KBM-7 (cell line): ENCODE measurements at regions of chr20 and their contacts with region 1.

Region 1: GRCh38 chr20:44388466-44389023 is 33.0 kb downstream of the HNF4A start:
- DNase-seq: peak; percentile 40

Region 2: DNA sequence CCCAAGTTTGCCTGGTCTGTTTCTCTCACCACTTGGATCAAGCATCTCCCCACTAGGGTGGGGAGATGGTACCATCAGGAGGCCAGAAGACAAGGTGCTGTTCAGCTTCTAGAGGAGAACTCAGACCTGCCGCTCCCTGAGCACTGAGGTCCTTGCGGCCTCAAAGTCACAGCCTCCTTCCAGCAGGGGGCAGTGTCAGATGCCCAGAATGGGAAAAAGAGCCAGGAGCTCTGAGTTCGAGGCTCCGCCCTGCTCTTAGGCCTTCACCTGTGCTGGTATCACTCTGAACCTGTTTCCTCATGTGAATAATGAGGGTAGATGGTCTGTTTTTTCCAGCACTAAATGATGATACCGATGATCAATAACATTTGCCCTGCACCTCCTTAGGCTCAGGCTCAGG is 405.2 kb before region 1 on chr20:
- in situ Hi-C with region 1: no loop called
- DNase-seq: no peak

Region 3: DNA sequence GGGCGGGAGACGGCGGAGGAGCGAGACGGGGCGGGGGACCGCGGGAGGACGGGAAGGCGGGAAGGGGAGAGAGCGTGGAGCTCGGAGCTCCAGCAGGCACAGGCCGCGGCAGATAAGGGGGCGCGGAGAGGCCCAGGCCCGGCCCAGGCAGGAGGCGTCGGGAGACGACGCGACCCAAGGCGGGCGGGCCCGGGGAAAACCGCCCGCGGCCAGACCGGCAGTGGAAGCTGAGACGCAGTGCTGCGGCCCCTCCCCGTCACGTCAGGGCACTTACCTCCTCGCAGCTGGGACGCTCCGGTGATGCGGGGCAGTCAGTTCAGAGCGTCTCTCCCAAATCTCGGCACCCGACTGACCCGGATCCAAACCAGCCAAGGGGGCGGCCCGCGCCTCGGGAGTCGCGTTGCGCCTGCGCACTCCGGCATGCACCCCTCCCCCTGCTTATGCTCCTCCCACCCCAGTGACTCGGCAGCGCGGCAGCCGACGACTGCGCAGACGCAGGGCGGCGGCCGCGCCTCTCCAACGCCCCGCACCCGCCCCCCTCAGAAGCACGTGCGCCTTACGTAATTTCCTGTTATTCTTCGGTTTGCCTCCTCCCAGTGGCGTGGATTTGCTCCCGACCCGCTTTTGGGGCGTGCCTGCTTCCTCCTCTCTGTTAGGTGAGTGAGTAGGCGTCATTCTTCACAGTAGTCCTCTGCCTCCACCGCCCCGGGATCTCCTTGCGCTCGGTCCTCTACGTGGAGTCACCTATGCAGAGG is 177.9 kb before region 1 on chr20 and contains the start of gene OSER1:
- in situ Hi-C with region 1: loop called (anchors 25 kb)
- DNase-seq: peak; percentile 98